HCT116 (cell line): ENCODE measurements at regions of chr10 and their contacts with region 1.

Region 1: GRCh38 chr10:102904346-102904745 is 13.7 kb upstream of the CNNM2 start:
- DNase-seq: no peak
- ATAC-seq: no peak
- H3K4me3 ChIP-seq: no peak overlapping the region
- H3K27ac ChIP-seq: no peak overlapping the region
- H3K4me1 ChIP-seq: no peaks in the 10 kb centered on the region
- H3K27me3 ChIP-seq: no peaks in the 10 kb centered on the region
- CTCF ChIP-seq: no peak
- POLR2A ChIP-seq: no peak
- RAD21 ChIP-seq: no peak

Region 2: GRCh38 chr10:102835007-102835482 is 69.3 kb before region 1 on chr10:
- CTCF ChIA-PET with region 1: interaction called, 57 read pairs
- POLR2A ChIA-PET with region 1: no interaction called
- RAD21 ChIA-PET with region 1: interaction called, 12 to 20 read pairs
- intact Hi-C with region 1: loop called (anchors 1 kb)
- DNase-seq: peak; percentile 77
- ATAC-seq: peak; percentile 100
- H3K4me3 ChIP-seq: no peak overlapping the region
- H3K27ac ChIP-seq: no peak overlapping the region
- H3K4me1 ChIP-seq: no peaks in the 10 kb centered on the region; a peak in 1 of 4 replicates
- H3K27me3 ChIP-seq: no peaks in the 10 kb centered on the region; the same call in 1 of the 2 replicates
- CTCF ChIP-seq: peak; percentile 92 to 99 (median 93)
- POLR2A ChIP-seq: no peak
- RAD21 ChIP-seq: peak; percentile 98

Region 3: GRCh38 chr10:102880256-102880655 is 24.1 kb before region 1 on chr10:
- CTCF ChIA-PET with region 1: interaction called, 10 read pairs
- POLR2A ChIA-PET with region 1: no interaction called
- RAD21 ChIA-PET with region 1: no interaction called
- intact Hi-C with region 1: no loop called
- DNase-seq: no peak
- ATAC-seq: no peak
- H3K4me3 ChIP-seq: no peak overlapping the region
- H3K27ac ChIP-seq: no peak overlapping the region
- H3K4me1 ChIP-seq: no peaks in the 10 kb centered on the region
- H3K27me3 ChIP-seq: no peaks in the 10 kb centered on the region
- CTCF ChIP-seq: no peak
- POLR2A ChIP-seq: no peak
- RAD21 ChIP-seq: no peak

Region 4: GRCh38 chr10:103238506-103239252 is 334.3 kb after region 1 on chr10:
- CTCF ChIA-PET with region 1: interaction called, 10 read pairs
- POLR2A ChIA-PET with region 1: no interaction called
- RAD21 ChIA-PET with region 1: no interaction called
- intact Hi-C with region 1: no loop called
- DNase-seq: peak; percentile 84
- ATAC-seq: peak; percentile 80
- H3K4me3 ChIP-seq: peak overlapping the region in 1 of 2 experiments; percentile 4; a peak in 1 of 4 replicates
- H3K27ac ChIP-seq: peak overlapping the region; percentile 44
- H3K4me1 ChIP-seq: peaks cover 44 to 52% of the 10 kb centered on the region in 2 experiments
- H3K27me3 ChIP-seq: no peaks in the 10 kb centered on the region
- CTCF ChIP-seq: peak in 2 of 3 experiments; percentile 60; a peak in 4 of 6 replicates
- POLR2A ChIP-seq: no peak
- RAD21 ChIP-seq: no peak